ENCODE measurements at regions of chr5 and their contacts with region 1.

Region 1: GRCh38 chr5:151924564-151925301 is at the start of gene GLRA1:
- H3K4me3 ChIP-seq: no peak within 1 kb of the TSS
- H3K27ac ChIP-seq: no peak within 1 kb of the TSS
- H3K4me1 ChIP-seq: no peaks in the 10 kb centered on the region
- CTCF ChIP-seq: no peak

Region 2: DNA sequence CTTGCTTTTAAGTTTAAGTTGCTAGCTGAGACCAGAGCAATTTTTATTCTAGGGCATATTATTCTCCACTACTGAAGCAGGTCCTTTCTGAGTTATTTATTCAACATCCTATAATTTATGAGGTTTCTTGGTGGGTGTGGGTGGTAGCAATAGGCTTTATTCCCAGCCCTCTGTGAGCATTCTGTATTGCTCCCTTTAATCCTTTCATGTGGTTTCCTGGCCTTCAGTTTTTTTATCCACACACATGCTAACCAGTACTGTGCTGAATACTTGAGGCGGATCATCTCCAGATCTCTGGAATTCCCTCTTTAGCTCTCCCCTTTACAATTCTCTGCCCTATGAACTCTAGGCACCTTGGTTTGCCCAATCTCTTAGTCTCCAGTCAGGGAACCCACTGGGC is 91.7 kb after region 1 on chr5:
- CTCF ChIA-PET with region 1: no interaction called
- POLR2A ChIA-PET with region 1: interaction called, 13 read pairs
- H3K4me3 ChIP-seq: no peak overlapping the region
- H3K27ac ChIP-seq: no peak overlapping the region
- H3K4me1 ChIP-seq: no peaks in the 10 kb centered on the region
- CTCF ChIP-seq: no peak